ENCODE measurements at regions of chr12 and their contacts with region 1.

Region 1: DNA sequence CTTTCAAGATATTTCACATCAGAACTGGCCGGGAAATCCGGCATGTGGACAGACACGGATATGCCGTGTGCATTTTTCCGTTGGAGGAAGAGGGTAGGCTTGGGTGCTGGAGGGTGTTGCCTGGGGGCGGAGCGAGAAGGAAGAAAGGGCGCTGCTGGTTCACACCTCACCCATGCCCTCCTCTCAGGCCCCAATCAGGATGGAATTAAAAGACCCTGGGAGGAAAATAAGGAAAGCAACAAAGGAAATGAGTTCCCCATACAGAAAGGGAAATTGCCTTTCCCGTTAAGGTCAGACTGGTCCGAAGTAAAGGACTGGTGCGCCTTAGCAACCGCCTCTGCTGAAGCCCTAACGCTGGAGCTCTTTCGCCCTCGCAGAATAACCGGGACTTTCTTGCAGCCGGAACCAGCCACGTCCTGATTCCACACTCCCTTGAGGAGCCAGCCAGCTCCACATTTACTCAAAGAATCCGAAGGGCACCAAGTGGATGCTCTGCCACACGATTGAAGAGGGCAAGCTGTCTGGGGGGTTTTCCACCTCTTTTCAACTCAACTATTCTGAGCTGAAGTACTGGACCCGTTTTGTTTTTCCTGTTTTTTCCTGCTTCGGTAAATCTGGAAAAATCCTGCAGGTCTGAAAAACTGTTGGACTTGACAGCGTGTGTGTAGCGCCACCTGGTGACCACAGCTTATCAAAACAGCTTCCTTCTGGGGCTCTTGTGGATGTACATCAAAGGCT is 37.7 kb upstream of the BCL2L14 start:
- DNase-seq: peak; percentile 35 to 54
- ATAC-seq: peak; percentile 76 to 80
- H3K4me3 ChIP-seq: peak overlapping the region; percentile 35 to 64 (median 49)
- H3K27ac ChIP-seq: peak overlapping the region in 3 of 4 donors; percentile 13 to 49 (median 37)
- H3K4me1 ChIP-seq: no peaks in the 10 kb centered on the region
- H3K27me3 ChIP-seq: no peaks in the 10 kb centered on the region
- CTCF ChIP-seq: peak; percentile 81 to 89 (median 85)
- POLR2A ChIP-seq: no peak

Region 2: DNA sequence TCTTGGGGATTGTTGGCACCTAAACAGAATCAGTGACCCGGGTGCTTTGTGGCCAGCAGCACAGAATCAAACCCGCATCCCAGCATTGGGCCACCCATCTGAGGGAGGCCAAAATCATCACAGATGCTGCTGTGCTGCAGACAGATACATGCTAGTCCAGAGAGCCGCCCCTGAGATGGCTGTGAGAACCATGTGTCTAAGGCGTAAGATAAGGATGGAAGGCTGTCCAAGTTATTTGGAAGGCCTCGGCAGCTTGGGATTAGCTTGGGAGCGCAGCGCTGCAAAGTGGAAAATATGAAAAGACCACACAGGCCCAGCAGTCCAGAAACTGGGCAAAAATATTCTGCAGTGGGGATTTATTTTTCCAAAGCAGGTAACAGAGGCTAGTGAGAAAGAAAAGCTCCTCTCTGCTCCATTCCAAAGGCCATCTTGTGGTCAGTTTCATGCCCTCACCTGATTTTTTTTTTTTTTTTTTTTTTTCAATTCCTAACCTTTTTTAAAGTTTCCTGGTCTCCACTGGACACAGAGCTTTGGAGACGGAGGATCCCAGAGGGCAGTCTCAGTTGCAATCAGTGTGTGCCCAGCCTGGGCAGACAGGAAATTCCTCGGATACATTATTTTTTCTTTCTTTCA is 141.2 kb before region 1 on chr12:
- in situ Hi-C with region 1: no loop called
- intact Hi-C with region 1: loop called (anchors 10 kb)
- DNase-seq: no peak
- ATAC-seq: no peak
- H3K4me3 ChIP-seq: no peak overlapping the region
- H3K27ac ChIP-seq: no peak overlapping the region
- H3K4me1 ChIP-seq: no peaks in the 10 kb centered on the region
- H3K27me3 ChIP-seq: no peaks in the 10 kb centered on the region
- CTCF ChIP-seq: peak in 3 of 5 experiments; percentile 23 to 49 (median 48)
- POLR2A ChIP-seq: no peak

Measured in gastrocnemius medialis (tissue), 4 donors.